Activated CD4-positive, alpha-beta memory T cell treated with anti-CD3 and anti-CD28 coated beads, Interleukin-2, amount 10 ng/mL, durations not matched to agents 7 days and 5 days (primary cell): ENCODE measurements at regions of chr5 and their contacts with region 1.

Region 1: DNA sequence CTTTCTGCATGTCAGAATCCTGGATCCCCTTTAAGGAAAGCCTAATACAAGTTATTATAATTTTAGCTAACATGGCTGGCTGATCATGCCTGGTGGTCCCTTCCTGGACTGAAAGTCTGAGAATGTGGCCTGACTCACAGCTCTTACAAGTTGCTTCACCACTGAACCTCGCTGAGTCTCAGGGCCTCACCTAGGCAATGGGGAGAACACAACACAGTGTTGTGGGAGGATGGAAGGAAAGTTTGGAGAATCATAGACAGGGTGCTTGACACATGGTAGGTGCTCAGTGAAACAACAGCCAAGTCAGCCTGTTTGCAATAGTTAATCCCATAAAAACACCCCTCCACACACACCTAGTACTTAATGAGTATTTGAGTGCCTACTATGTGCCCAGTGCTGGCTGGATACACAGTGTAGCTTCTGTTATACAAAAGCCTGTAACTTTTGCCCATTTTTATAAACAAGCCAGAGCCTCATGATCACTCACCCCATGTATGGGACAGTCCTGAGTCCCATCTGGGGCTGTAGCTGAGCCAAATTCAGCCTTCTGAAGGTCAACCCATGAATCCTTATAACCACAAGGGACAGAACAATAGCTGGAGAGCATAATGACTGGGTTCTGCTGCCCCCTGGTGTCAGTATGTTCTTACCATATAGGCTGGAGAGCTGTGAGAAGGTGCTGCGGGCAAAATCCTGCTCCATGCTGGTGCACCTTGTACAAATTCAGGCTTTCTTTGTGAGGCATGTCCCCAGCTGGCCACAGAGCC is 3.9 kb downstream of the ACSL6 start:
- DNase-seq: peak; percentile 80
- H3K4me3 Mint-ChIP-seq: no peak overlapping the region
- H3K27ac Mint-ChIP-seq: no peak overlapping the region
- H3K4me1 Mint-ChIP-seq: peaks cover 20% of the 10 kb centered on the region
- H3K27me3 Mint-ChIP-seq: peaks cover 41% of the 10 kb centered on the region

Region 2: GRCh38 chr5:131423056-131423455 is 584.5 kb before region 1 on chr5:
- CTCF ChIA-PET with region 1: interaction called, 17 read pairs
- POLR2A ChIA-PET with region 1: no interaction called
- DNase-seq: no peak
- H3K4me3 Mint-ChIP-seq: no peak overlapping the region
- H3K27ac Mint-ChIP-seq: no peak overlapping the region
- H3K4me1 Mint-ChIP-seq: peaks cover 14% of the 10 kb centered on the region
- H3K27me3 Mint-ChIP-seq: no peaks in the 10 kb centered on the region

Region 3: GRCh38 chr5:131796793-131797693 is 210.5 kb before region 1 on chr5 and contains the start of gene FNIP1:
- CTCF ChIA-PET with region 1: interaction called, 22 read pairs
- POLR2A ChIA-PET with region 1: interaction called, 3 read pairs
- DNase-seq: peak; percentile 99
- H3K4me3 Mint-ChIP-seq: peak within 1 kb of the TSS; percentile 87
- H3K27ac Mint-ChIP-seq: peak within 1 kb of the TSS; percentile 83
- H3K4me1 Mint-ChIP-seq: peaks cover 27% of the 10 kb centered on the region
- H3K27me3 Mint-ChIP-seq: peaks cover 3% of the 10 kb centered on the region
- total RNA-seq, gene FNIP1: 27.8 to 28.7 TPM

Region 4: DNA sequence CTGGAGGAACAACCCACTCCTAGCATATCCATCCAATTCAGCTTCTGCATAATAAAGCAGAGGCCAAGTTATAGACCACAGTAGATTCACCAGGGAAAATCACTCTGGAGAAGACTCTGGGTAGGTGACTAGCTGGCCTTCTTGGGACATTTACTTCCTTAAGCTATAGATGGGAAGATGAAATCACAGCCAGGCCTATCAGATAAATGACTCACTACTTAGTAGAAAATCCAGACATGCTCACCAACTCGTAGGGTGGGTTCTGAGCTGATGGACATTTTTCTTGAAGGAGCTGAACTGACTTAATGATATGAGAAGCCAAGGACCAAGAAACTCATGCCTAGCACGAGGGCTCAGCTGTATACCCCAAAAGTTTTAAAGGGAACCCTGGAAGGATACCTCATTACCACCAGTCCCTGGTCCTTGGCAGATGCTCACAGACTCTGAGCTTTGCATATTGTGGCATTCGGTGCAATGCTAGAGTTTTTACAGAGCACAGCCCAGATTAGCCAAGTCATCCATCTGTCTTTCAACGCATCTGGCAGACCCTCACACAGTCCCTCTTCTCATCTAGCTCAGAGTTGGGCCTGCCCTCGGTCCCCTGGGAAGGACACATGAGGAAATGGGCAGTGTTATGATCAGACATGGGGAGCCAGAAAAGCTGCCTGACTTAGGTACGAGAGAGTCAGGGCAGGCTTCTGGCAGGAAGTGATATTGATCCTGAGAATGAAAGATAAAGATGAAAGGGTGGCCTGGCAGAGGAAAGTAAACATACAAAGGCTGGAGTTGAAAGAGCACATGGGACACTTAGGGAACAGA is 11.2 kb before region 1 on chr5:
- CTCF ChIA-PET with region 1: interaction called, 14 read pairs
- POLR2A ChIA-PET with region 1: no interaction called
- DNase-seq: no peak
- H3K4me3 Mint-ChIP-seq: no peak overlapping the region
- H3K27ac Mint-ChIP-seq: no peak overlapping the region
- H3K4me1 Mint-ChIP-seq: peaks cover 34% of the 10 kb centered on the region
- H3K27me3 Mint-ChIP-seq: no peaks in the 10 kb centered on the region

Region 5: DNA sequence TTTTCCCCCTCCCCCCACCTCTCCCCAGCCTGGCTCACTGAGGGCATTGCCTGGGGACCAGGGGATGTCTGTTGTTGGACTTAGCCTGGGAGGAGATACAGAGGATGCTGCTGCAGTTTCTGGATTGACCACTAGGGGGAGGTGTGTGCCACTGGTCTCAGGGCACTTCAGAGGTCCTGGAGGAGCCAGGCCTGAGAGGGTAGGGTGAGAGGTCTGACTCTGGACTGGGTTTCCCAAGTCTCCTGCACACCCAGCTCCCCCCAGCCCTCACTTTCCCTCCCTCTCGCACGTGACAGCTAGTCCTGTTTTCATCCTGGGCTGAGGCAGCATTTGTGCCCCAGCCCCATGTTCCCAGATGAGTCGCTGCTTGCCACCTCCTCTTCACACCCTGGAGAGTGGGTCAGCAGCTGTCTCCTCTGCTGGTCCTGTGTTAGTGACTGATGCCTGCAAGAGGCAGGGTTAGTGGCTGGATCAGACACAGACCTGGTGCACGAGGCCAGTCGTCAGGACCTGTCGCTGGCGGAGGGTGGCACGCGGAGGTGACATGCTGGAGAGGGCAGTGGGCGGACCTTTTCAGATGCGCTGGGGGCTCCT is 57.3 kb after region 1 on chr5:
- CTCF ChIA-PET with region 1: interaction called, 53 read pairs
- POLR2A ChIA-PET with region 1: no interaction called
- DNase-seq: peak; percentile 85
- H3K4me3 Mint-ChIP-seq: no peak overlapping the region
- H3K27ac Mint-ChIP-seq: no peak overlapping the region
- H3K4me1 Mint-ChIP-seq: peaks cover 35% of the 10 kb centered on the region
- H3K27me3 Mint-ChIP-seq: no peaks in the 10 kb centered on the region